Panc1 (cell line): ENCODE measurements at regions of chr7 and their contacts with region 1.

Region 1: DNA sequence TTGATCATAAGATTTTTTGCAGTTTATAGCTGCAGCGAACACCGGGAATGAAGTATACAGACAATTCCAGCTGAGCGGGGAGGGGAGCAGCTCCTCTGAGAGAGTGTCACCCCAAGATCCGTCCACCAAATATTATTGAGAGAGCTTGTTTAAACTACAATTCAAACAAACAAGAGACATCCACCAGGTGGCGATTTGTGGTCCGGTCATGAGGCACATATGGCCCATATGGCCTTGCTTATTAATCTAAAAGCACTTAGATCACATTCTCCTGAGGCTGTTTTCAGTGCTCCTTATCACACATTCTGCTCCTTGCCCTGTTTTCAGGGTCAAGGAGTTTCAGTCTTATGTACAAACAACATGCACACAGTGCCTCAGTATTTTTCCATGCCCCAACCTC is 83.1 kb downstream of the THSD7A start:
- DNase-seq: no peak
- ATAC-seq: no peak; the same call in 1 of the 2 replicates
- H3K4me3 ChIP-seq: no peak overlapping the region
- H3K27ac ChIP-seq: peak overlapping the region; percentile 95
- H3K4me1 ChIP-seq: peaks cover 43% of the 10 kb centered on the region
- H3K27me3 ChIP-seq: no peaks in the 10 kb centered on the region
- CTCF ChIP-seq: peak; percentile 60

Region 2: DNA sequence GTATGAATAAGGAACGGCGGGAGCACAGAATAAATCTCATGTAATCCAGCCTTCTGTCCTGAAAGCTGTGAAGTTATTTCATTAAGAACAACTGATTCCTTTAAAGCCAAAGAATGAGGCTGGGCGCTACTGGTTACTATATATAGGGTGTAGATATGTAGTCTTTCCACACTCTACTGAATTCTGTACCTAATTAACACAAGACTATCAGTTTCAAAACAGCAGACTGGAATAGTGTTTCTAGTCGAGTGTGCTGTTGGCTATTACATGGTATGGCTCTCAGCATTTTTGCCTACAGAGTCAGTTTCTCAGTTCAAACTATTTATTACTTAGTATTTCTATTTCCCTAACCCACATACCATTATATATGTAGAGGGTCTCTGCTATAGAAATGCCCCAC is 80.2 kb before region 1 on chr7:
- CTCF ChIA-PET with region 1: no interaction called
- POLR2A ChIA-PET with region 1: no interaction called
- in situ Hi-C with region 1: no loop called
- intact Hi-C with region 1: no loop called
- DNase-seq: no peak
- ATAC-seq: no peak
- H3K4me3 ChIP-seq: no peak overlapping the region
- H3K27ac ChIP-seq: no peak overlapping the region
- H3K4me1 ChIP-seq: peaks cover 2% of the 10 kb centered on the region; the same call in 1 of the 2 replicates
- H3K27me3 ChIP-seq: no peaks in the 10 kb centered on the region
- CTCF ChIP-seq: no peak

Region 3: GRCh38 chr7:11689096-11689495 is 59.8 kb before region 1 on chr7:
- CTCF ChIA-PET with region 1: no interaction called
- POLR2A ChIA-PET with region 1: interaction called, 19 read pairs
- in situ Hi-C with region 1: no loop called
- intact Hi-C with region 1: no loop called
- DNase-seq: no peak
- ATAC-seq: no peak
- H3K4me3 ChIP-seq: no peak overlapping the region
- H3K27ac ChIP-seq: peak overlapping the region; percentile 50; the same call in 1 of the 2 replicates
- H3K4me1 ChIP-seq: peaks cover 3% of the 10 kb centered on the region; the same call in 1 of the 2 replicates
- H3K27me3 ChIP-seq: no peaks in the 10 kb centered on the region
- CTCF ChIP-seq: no peak

Region 4: GRCh38 chr7:11881680-11882079 is 132.8 kb after region 1 on chr7:
- CTCF ChIA-PET with region 1: no interaction called
- POLR2A ChIA-PET with region 1: no interaction called
- in situ Hi-C with region 1: no loop called
- intact Hi-C with region 1: no loop called
- DNase-seq: no peak
- ATAC-seq: no peak
- H3K4me3 ChIP-seq: no peak overlapping the region
- H3K27ac ChIP-seq: no peak overlapping the region
- H3K4me1 ChIP-seq: no peaks in the 10 kb centered on the region
- H3K27me3 ChIP-seq: no peaks in the 10 kb centered on the region
- CTCF ChIP-seq: no peak